Left cardiac atrium (tissue), 4 donors: ENCODE measurements at regions of chr3 and their contacts with region 1.

Region 1: GRCh38 chr3:151086484-151087456 is 1.3 kb downstream of the MED12L start:
- DNase-seq: peak; percentile 79
- ATAC-seq: peak; percentile 82 to 92

Region 2: DNA sequence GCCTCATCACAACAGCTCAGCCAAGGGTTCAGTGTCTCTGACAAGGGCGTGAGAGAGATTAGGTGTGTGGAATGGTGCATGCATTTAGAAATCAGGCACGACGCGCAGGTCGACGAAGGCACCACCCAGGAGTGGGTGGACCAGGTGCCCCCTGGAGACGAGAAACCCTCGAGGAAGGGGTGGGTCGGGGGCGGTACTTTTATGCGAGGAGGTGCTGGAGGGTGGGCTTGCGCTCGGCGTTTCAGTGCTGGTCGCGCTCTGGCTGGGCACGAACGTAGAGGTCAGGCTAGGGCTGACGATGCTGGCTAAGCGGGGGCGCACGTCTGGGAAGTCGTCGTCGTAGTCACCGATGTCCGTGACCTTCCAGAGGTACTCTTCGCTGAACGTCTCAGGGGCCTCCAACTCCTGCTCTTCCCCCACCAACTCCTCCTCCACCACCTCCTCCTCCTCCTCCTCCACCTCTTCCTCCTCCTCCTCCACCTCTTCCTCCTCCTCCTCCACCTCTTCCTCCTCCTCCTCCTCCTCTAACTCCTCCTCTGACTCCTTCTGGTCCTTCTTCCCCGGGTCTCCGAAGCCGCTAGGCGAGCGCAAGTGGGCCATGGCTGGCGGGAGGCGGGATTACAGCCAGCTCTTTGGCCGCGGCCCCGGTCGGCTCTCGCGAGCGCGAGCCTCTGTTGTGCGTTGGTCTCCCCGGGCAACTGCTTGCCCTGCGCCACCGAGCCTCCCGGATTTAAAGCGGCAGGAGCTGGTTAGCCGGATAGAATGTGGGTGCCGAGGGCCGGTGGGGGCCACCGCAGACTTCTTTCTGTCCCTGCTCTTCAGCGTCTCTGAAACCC is 383.3 kb before region 1 on chr3 and contains the start of gene ERICH6:
- intact Hi-C with region 1: loop called in 1 of 2 experiments (anchors 5 kb)
- DNase-seq: peak; percentile 94
- ATAC-seq: peak; percentile 99
- total RNA-seq, gene ERICH6: 0.39 TPM in 1 of 2 donors, not detected in the other